ENCODE measurements at regions of chr11 and their contacts with region 1.

Region 1: GRCh38 chr11:10933455-10934292 is 75.8 kb upstream of the ZBED5 start:
- DNase-seq: peak; percentile 81 to 93 (median 84)
- ATAC-seq: peak; percentile 97
- H3K4me3 ChIP-seq: peak overlapping the region; percentile 36
- H3K27ac ChIP-seq: peak overlapping the region; percentile 41; the same call in 2 of the 3 replicates
- H3K4me1 ChIP-seq: peaks cover 9 to 26% of the 10 kb centered on the region in 2 experiments; a peak in 4 of 5 replicates
- H3K27me3 ChIP-seq: no peaks in the 10 kb centered on the region
- CTCF ChIP-seq: peak; percentile 97 to 98 (median 98)
- EP300 ChIP-seq: no peak; the same call in 1 of the 2 replicates
- POLR2A ChIP-seq: 0 out of 2 replicates have a peak, but pooled peaks have one; percentile 45
- RAD21 ChIP-seq: peak; percentile 95 to 96

Region 2: GRCh38 chr11:10866893-10867331 is 66.8 kb before region 1 on chr11:
- CTCF ChIA-PET with region 1: no interaction called
- POLR2A ChIA-PET with region 1: no interaction called
- in situ Hi-C with region 1: no loop called
- intact Hi-C with region 1: no loop called
- DNase-seq: peak in 1 of 4 experiments; percentile 43
- ATAC-seq: peak; percentile 64
- H3K4me3 ChIP-seq: no peak overlapping the region
- H3K27ac ChIP-seq: no peak overlapping the region
- H3K4me1 ChIP-seq: no peaks in the 10 kb centered on the region
- H3K27me3 ChIP-seq: no peaks in the 10 kb centered on the region
- CTCF ChIP-seq: no peak
- EP300 ChIP-seq: no peak
- POLR2A ChIP-seq: no peak
- RAD21 ChIP-seq: no peak

Region 3: DNA sequence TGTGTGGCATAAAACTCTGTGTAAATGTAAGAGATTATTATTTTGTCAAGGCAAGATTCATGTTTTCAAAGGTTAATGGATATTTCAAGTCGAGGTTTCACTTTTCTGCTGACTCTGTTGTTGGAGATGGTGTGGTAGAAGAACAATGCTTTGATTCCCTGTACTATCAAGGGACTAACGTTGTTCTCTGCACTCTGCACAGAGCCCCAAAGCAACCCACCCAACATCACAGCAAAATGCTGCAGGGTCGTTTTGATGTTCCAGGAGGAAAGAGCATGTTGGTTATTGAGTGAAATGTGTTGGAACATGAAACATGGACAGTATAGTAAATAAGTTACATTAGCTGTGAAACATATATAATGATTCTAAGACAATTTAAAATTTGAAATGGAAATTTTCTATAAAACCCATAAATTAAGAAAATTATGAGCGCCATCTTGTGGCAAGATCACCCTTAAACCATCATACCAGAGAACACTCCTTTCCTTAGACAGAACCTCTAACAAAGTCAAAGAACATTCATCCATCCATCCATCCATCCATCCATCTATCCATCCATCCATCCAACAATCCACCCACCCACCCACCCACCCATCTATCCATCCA is 88.6 kb after region 1 on chr11:
- CTCF ChIA-PET with region 1: interaction called, 46 read pairs
- POLR2A ChIA-PET with region 1: interaction called, 3 read pairs
- in situ Hi-C with region 1: loop called (anchors 5 kb)
- intact Hi-C with region 1: loop called (anchors 1 kb)
- DNase-seq: peak; percentile 33 to 49 (median 40)
- ATAC-seq: peak; percentile 63
- H3K4me3 ChIP-seq: no peak overlapping the region
- H3K27ac ChIP-seq: no peak overlapping the region
- H3K4me1 ChIP-seq: peaks cover 0 to 4% of the 10 kb centered on the region in 2 experiments; a peak in 2 of 5 replicates
- H3K27me3 ChIP-seq: no peaks in the 10 kb centered on the region
- CTCF ChIP-seq: peak; percentile 28 to 67 (median 36); a peak in 3 of 6 replicates
- EP300 ChIP-seq: no peak
- POLR2A ChIP-seq: no peak
- RAD21 ChIP-seq: peak; percentile 69 to 82

Region 4: DNA sequence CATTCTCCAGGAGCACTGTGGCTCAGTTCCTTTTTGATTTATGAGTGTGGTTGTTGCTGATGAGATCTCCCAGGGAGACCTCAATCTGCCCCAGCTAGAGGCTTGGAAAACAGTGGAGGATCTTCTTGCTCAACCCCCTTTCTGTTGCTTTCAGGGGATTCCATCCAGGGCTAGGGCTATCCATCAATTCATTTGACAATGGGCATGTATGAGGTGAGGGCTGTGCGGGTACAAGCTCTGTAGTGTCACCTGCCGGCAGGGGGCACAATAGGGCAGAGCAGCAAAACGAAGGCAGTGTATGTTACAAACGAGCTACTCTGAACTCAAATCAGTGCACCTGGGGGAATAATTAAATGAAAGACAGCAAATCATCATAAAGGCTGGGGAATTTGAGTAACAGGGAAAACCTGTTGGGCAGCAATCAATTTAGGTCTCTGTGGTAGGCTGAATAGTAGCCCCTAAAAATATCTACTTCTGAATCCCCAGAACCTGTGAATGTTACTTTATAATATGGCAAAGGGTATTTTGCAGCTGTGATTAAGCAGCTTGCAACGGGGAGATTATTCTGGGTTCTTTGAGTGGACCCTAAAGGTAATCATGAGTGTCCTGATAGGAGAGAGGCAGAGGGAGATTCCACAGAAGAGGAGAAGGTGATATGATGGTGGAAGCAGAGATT is 94.5 kb after region 1 on chr11:
- CTCF ChIA-PET with region 1: interaction called, 46 read pairs
- POLR2A ChIA-PET with region 1: no interaction called
- in situ Hi-C with region 1: loop called (anchors 5 kb)
- intact Hi-C with region 1: loop called (anchors 1 kb)
- DNase-seq: peak; percentile 54 to 65 (median 62)
- ATAC-seq: peak; percentile 95
- H3K4me3 ChIP-seq: no peak overlapping the region
- H3K27ac ChIP-seq: no peak overlapping the region
- H3K4me1 ChIP-seq: no peaks in the 10 kb centered on the region
- H3K27me3 ChIP-seq: peaks cover 2 to 4% of the 10 kb centered on the region in 2 experiments; a peak in 3 of 5 replicates
- CTCF ChIP-seq: peak; percentile 75 to 85 (median 84)
- EP300 ChIP-seq: no peak
- POLR2A ChIP-seq: no peak
- RAD21 ChIP-seq: peak; percentile 60 to 80

Measured in K562 (cell line).